GM10248 (cell line): ENCODE measurements at regions of chr7 and their contacts with region 1.

Region 1: DNA sequence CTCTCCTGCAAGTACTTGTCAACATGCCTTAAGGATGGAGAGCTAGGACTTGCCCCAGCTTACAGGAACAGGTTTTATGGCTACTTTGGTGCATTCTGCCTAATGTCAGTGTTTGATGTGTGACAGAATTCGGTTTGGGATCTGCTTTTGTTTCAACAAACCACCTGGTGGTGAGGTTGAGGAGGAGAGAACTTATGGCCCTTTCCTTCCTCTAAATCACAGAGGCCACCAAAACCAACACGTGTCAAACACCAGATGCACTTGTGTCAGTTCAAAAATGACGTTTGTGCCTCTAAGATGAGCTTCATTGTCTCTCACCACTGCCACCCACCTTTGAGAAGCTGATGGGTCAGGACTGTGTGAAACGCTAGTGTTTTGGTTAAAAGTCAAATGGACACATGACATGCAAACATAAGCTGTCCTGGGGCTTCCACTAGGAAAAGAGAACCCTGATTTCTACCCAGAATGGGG is 83.9 kb downstream of the OSBPL3 start:
- DNase-seq: peak; percentile 75
- CTCF ChIP-seq: no peak

Region 2: GRCh38 chr7:24732646-24733413 is 163.2 kb before region 1 on chr7:
- CTCF ChIA-PET with region 1: no interaction called
- POLR2A ChIA-PET with region 1: no interaction called
- DNase-seq: no peak
- CTCF ChIP-seq: no peak

Region 3: GRCh38 chr7:24819916-24820689 is 76.0 kb before region 1 on chr7:
- CTCF ChIA-PET with region 1: interaction called, 12 read pairs
- POLR2A ChIA-PET with region 1: no interaction called
- DNase-seq: peak; percentile 81
- CTCF ChIP-seq: peak; percentile 75

Region 4: GRCh38 chr7:24877790-24878311 is 18.2 kb before region 1 on chr7:
- CTCF ChIA-PET with region 1: interaction called, 48 read pairs
- POLR2A ChIA-PET with region 1: no interaction called
- DNase-seq: peak; percentile 36
- CTCF ChIP-seq: no peak

Region 5: GRCh38 chr7:24882989-24883621 is 13.0 kb before region 1 on chr7:
- CTCF ChIA-PET with region 1: interaction called, 48 read pairs
- POLR2A ChIA-PET with region 1: no interaction called
- DNase-seq: no peak
- CTCF ChIP-seq: no peak

Region 6: DNA sequence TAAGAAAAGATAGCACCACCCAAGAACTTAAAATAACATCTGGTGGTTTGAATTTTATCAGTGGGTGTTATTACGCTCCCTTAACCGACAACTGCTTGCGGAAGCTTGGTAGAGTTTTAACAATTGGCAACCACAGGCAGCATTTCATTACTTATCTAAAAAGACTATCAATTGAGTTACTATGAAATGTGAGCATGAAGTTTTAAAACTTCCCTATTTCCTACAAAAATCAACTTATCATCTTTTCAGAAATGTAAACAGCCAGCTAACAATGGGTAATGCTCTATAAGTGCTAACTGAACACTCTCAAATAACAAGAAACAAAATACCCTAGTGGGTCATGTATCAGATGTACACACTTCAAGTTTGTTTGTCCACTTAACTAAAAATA is 15.1 kb after region 1 on chr7:
- CTCF ChIA-PET with region 1: interaction called, 12 read pairs
- POLR2A ChIA-PET with region 1: interaction called, 3 read pairs
- DNase-seq: no peak
- CTCF ChIP-seq: no peak